ENCODE measurements at regions of chr3 and their contacts with region 1.

Region 1: GRCh38 chr3:4271834-4272233 is 31.3 kb upstream of the SETMAR start:
- DNase-seq: peak in 1 of 2 experiments; percentile 21
- H3K4me3 ChIP-seq: no peak overlapping the region
- H3K4me3 Mint-ChIP-seq: no peak overlapping the region
- H3K27ac Mint-ChIP-seq: no peak overlapping the region
- H3K4me1 ChIP-seq: no peaks in the 10 kb centered on the region
- H3K4me1 Mint-ChIP-seq: no peaks in the 10 kb centered on the region
- H3K27me3 ChIP-seq: no peaks in the 10 kb centered on the region
- H3K27me3 Mint-ChIP-seq: peaks cover 5% of the 10 kb centered on the region
- CTCF ChIP-seq: peak; percentile 57 to 65

Region 2: DNA sequence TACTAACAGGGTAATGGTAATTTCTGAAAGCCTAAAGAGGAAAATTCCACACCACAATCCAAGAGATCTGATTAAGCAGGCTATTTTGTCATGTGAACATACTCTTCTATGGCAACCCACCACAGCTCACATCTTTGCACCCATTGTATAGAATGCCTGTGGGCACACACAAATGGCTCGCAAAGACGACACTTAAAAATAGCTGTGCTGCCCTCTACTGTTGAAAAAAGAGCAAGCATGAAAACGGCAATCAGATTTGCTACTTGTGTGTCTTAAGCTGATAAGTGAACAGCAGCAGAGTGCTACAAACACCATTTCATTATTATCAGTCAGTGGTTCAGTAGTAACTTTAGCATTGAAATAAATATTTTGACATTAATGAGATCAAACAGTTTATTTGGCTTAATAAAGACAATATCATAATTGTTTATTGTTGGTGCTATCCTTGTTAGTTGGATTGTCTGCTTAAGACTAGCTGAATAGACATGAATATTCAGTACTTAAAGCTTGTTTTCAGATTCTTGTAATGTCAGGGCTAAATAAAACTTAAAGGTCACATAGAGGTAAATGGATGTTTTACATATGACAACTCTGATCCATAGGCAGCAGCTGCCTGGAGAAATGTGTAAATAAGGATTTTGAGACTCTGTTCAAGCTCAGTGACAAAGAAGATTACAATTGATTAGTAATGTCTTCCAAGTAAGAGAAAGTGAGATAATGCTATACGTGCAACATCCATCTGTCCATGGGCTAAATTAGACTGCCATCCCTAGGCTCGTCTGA is 273.5 kb before region 1 on chr3:
- CTCF ChIA-PET with region 1: no interaction called
- POLR2A ChIA-PET with region 1: no interaction called
- intact Hi-C with region 1: loop called (anchors 5 kb)
- DNase-seq: peak; percentile 38 to 44
- H3K4me3 ChIP-seq: no peak overlapping the region
- H3K4me3 Mint-ChIP-seq: no peak overlapping the region
- H3K27ac Mint-ChIP-seq: no peak overlapping the region
- H3K4me1 ChIP-seq: no peaks in the 10 kb centered on the region
- H3K4me1 Mint-ChIP-seq: peaks cover 8% of the 10 kb centered on the region
- H3K27me3 ChIP-seq: no peaks in the 10 kb centered on the region
- H3K27me3 Mint-ChIP-seq: no peaks in the 10 kb centered on the region
- CTCF ChIP-seq: peak; percentile 40 to 60

Region 3: GRCh38 chr3:4078903-4079302 is 192.9 kb before region 1 on chr3:
- CTCF ChIA-PET with region 1: interaction called, 4 read pairs
- POLR2A ChIA-PET with region 1: no interaction called
- intact Hi-C with region 1: loop called (anchors 10 kb)
- DNase-seq: no peak
- H3K4me3 ChIP-seq: no peak overlapping the region
- H3K4me3 Mint-ChIP-seq: no peak overlapping the region
- H3K27ac Mint-ChIP-seq: peak overlapping the region; percentile 72
- H3K4me1 ChIP-seq: peaks cover 15% of the 10 kb centered on the region
- H3K4me1 Mint-ChIP-seq: peaks cover 17% of the 10 kb centered on the region
- H3K27me3 ChIP-seq: no peaks in the 10 kb centered on the region
- H3K27me3 Mint-ChIP-seq: no peaks in the 10 kb centered on the region
- CTCF ChIP-seq: no peak